Activated B cell treated with CpG ODN at 0.5 μM for 24 hours (primary cell): ENCODE measurements at regions of chr6 and their contacts with region 1.

Region 1: DNA sequence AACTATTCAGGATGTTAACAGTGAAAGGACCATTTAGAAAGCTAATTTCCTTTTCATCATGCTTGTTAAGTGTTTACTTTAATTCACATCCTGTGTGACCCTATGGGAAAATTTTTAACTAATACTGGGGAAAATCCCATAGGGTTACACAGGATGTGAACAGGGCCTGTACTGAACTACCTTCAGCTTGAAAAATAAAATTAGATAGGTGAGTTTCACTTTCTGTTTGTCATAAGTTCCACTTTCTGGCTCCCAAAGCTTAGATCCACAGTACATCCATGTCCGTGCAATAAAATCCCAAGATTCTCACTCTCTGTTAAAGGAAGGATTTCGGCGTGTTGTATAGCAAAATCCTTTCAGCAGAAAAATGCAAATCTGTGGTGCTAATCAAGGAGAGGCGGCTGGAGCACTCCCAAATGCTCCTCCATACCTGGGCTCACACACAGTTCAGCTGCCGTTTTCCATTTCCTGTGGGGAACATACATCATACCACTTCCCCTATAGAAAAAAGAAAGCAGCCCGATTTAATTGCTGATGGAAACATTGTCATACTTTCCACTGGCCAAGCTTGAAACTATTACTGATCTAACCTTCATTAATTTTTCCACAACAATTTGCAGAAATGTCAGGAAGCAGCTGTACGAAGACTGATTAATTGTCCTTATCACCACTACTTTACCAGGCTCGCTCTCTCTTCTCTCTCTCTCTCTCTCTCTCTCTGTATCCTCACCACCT is 125.2 kb downstream of the HIVEP2 start:
- DNase-seq: no peak
- ATAC-seq: peak; percentile 61
- H3K4me3 Mint-ChIP-seq: peak overlapping the region; percentile 74
- H3K27ac Mint-ChIP-seq: peak overlapping the region; percentile 93
- H3K4me1 Mint-ChIP-seq: peaks cover 79% of the 10 kb centered on the region
- H3K27me3 Mint-ChIP-seq: no peaks in the 10 kb centered on the region
- CTCF ChIP-seq: no peak

Region 2: DNA sequence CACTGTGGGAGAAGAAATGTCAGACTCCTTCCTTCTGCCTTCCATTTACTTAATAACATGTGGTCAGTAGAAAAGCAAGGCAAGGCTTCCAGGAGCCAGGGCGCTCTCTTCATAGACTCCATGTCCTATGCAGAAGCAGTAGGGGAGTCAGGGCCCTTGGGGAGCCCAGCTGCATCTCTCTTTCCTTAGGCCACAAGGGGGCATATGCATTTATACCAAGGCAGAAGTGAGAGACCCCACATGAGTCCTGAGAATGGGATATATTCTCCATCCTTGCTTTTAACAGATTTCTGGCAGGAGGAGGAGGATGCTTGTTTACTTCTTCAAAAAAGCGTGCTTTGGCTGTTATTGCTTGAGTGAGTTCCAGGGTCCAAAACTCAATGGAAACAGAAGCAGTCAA is 73.2 kb before region 1 on chr6:
- CTCF ChIA-PET with region 1: interaction called, 5 read pairs
- POLR2A ChIA-PET with region 1: no interaction called
- intact Hi-C with region 1: loop called (anchors 5 kb)
- DNase-seq: no peak
- ATAC-seq: peak; percentile 58
- H3K4me3 Mint-ChIP-seq: no peak overlapping the region
- H3K27ac Mint-ChIP-seq: no peak overlapping the region
- H3K4me1 Mint-ChIP-seq: peaks cover 11% of the 10 kb centered on the region
- H3K27me3 Mint-ChIP-seq: peaks cover 3% of the 10 kb centered on the region
- CTCF ChIP-seq: no peak

Region 3: DNA sequence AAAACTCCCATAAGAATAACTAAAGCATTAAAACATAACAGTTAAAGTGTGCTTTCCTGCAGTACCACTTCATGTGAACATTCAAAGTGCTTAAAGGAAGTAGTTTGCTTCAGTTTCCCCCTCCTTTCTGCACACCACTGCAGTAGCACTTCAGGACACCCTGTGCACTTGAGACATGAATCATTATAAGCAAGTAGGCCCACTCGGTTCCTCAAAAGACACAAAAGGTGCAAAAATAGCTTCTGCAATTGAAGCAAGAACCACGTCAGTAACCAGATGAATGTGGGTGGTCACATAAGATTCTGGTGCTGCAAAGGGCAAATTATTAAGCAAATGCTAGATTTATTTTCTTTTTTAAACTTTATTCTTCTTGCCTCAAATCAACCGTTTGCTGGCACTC is 35.4 kb before region 1 on chr6:
- CTCF ChIA-PET with region 1: no interaction called
- POLR2A ChIA-PET with region 1: interaction called, 4 read pairs
- intact Hi-C with region 1: loop called (anchors 5 kb)
- DNase-seq: no peak
- ATAC-seq: peak; percentile 98
- H3K4me3 Mint-ChIP-seq: peak overlapping the region; percentile 15
- H3K27ac Mint-ChIP-seq: peak overlapping the region; percentile 78
- H3K4me1 Mint-ChIP-seq: peaks cover 34% of the 10 kb centered on the region
- H3K27me3 Mint-ChIP-seq: no peaks in the 10 kb centered on the region
- CTCF ChIP-seq: no peak

Region 4: DNA sequence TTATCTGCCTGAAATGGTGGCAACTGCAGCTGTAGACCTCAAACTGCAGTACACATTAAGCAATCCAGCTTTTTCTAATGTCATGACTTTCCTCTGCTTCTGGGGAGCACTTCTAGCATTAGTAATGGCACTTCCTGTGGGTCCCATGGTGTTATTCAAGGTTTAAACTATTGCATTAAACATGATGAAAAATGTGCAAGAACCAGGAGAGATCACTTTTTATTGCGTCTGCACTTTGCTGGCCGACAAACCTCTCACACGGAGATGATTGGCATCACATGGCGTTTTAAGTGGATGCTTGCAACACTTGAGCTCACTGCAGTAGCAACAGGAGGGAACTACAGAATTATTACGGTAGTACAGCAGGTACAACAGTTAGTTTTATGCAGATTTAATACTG is 23.2 kb before region 1 on chr6:
- CTCF ChIA-PET with region 1: no interaction called
- POLR2A ChIA-PET with region 1: interaction called, 15 read pairs
- intact Hi-C with region 1: loop called (anchors 2 kb)
- DNase-seq: no peak
- ATAC-seq: no peak
- H3K4me3 Mint-ChIP-seq: no peak overlapping the region
- H3K27ac Mint-ChIP-seq: no peak overlapping the region
- H3K4me1 Mint-ChIP-seq: peaks cover 42% of the 10 kb centered on the region
- H3K27me3 Mint-ChIP-seq: no peaks in the 10 kb centered on the region
- CTCF ChIP-seq: no peak

Region 5: GRCh38 chr6:142802124-142802523 is 17.6 kb before region 1 on chr6:
- CTCF ChIA-PET with region 1: no interaction called
- POLR2A ChIA-PET with region 1: interaction called, 5 read pairs
- intact Hi-C with region 1: loop called (anchors 2 kb)
- DNase-seq: no peak
- ATAC-seq: peak; percentile 41
- H3K4me3 Mint-ChIP-seq: no peak overlapping the region
- H3K27ac Mint-ChIP-seq: peak overlapping the region; percentile 4
- H3K4me1 Mint-ChIP-seq: peaks cover 55% of the 10 kb centered on the region
- H3K27me3 Mint-ChIP-seq: no peaks in the 10 kb centered on the region
- CTCF ChIP-seq: no peak

Region 6: GRCh38 chr6:142857233-142857761 is 37.5 kb after region 1 on chr6:
- CTCF ChIA-PET with region 1: no interaction called
- POLR2A ChIA-PET with region 1: interaction called, 8 read pairs
- intact Hi-C with region 1: loop called (anchors 5 kb)
- DNase-seq: no peak
- ATAC-seq: peak; percentile 26
- H3K4me3 Mint-ChIP-seq: peak overlapping the region; percentile 73
- H3K27ac Mint-ChIP-seq: peak overlapping the region; percentile 95
- H3K4me1 Mint-ChIP-seq: peaks cover 90% of the 10 kb centered on the region
- H3K27me3 Mint-ChIP-seq: no peaks in the 10 kb centered on the region
- CTCF ChIP-seq: no peak

Region 7: GRCh38 chr6:142926494-142927270 is 106.9 kb after region 1 on chr6:
- CTCF ChIA-PET with region 1: no interaction called
- POLR2A ChIA-PET with region 1: interaction called, 15 read pairs
- intact Hi-C with region 1: no loop called
- DNase-seq: peak; percentile 72
- ATAC-seq: peak; percentile 93
- H3K4me3 Mint-ChIP-seq: peak overlapping the region; percentile 86
- H3K27ac Mint-ChIP-seq: peak overlapping the region; percentile 93
- H3K4me1 Mint-ChIP-seq: peaks cover 50% of the 10 kb centered on the region
- H3K27me3 Mint-ChIP-seq: no peaks in the 10 kb centered on the region
- CTCF ChIP-seq: no peak